ENCODE measurements at regions of chr19 and their contacts with region 1.

Region 1: GRCh38 chr19:38387550-38388348 is at the start of gene GGN:
- DNase-seq: peak; percentile 98
- H3K4me3 ChIP-seq: peak within 1 kb of the TSS; percentile 78 to 96 (median 91)
- H3K27ac ChIP-seq: peak within 1 kb of the TSS; percentile 84
- H3K4me1 ChIP-seq: peaks cover 15% of the 10 kb centered on the region
- H3K27me3 ChIP-seq: no peaks in the 10 kb centered on the region
- CTCF ChIP-seq: no peak
- POLR2A ChIP-seq: peak; percentile 18
- total RNA-seq, gene GGN: 0.88 and 1.5 TPM in 2 replicates

Region 2: GRCh38 chr19:38229585-38230073 is 158.1 kb before region 1 on chr19:
- CTCF ChIA-PET with region 1: interaction called, 21 read pairs
- POLR2A ChIA-PET with region 1: no interaction called
- dilution Hi-C with region 1: no loop called
- intact Hi-C with region 1: loop called (anchors 5 kb)
- DNase-seq: peak; percentile 77
- H3K4me3 ChIP-seq: peak overlapping the region in 1 of 3 experiments; percentile 14
- H3K27ac ChIP-seq: no peak overlapping the region
- H3K4me1 ChIP-seq: peaks cover 8% of the 10 kb centered on the region
- H3K27me3 ChIP-seq: peaks cover 9 to 14% of the 10 kb centered on the region in 2 experiments
- CTCF ChIP-seq: peak in 1 of 2 donors; percentile 13
- POLR2A ChIP-seq: no peak

Region 3: DNA sequence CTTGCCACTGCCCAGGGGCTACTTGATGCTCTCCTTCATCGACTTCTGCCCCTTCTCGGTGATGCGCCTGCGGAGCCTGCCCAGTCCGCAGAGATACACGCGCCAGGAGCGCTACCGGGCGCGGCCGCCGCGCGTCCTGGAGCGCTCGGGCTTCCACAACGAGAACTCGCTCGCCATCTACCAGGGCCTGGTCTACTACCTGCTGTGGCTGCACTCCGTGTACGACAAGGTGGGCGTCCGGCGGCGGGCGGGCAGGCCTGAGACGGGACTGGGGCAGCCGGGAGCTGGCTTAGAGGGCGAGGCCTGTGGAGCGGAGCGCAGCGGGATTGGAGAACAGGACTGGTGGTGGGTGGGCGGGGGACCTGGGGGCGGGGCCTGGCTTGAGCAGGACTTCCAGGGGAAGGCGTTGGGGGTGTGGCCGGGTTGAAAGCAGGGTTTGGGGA is 26.1 kb before region 1 on chr19:
- CTCF ChIA-PET with region 1: interaction called, 3 read pairs
- POLR2A ChIA-PET with region 1: no interaction called
- dilution Hi-C with region 1: no loop called
- intact Hi-C with region 1: loop called (anchors 2 kb)
- DNase-seq: peak; percentile 65
- H3K4me3 ChIP-seq: peak overlapping the region; percentile 42 to 49 (median 45)
- H3K27ac ChIP-seq: no peak overlapping the region
- H3K4me1 ChIP-seq: peaks cover 3% of the 10 kb centered on the region
- H3K27me3 ChIP-seq: peaks cover 13 to 14% of the 10 kb centered on the region in 2 experiments
- CTCF ChIP-seq: peak in 1 of 2 donors; percentile 10
- POLR2A ChIP-seq: no peak

Region 4: DNA sequence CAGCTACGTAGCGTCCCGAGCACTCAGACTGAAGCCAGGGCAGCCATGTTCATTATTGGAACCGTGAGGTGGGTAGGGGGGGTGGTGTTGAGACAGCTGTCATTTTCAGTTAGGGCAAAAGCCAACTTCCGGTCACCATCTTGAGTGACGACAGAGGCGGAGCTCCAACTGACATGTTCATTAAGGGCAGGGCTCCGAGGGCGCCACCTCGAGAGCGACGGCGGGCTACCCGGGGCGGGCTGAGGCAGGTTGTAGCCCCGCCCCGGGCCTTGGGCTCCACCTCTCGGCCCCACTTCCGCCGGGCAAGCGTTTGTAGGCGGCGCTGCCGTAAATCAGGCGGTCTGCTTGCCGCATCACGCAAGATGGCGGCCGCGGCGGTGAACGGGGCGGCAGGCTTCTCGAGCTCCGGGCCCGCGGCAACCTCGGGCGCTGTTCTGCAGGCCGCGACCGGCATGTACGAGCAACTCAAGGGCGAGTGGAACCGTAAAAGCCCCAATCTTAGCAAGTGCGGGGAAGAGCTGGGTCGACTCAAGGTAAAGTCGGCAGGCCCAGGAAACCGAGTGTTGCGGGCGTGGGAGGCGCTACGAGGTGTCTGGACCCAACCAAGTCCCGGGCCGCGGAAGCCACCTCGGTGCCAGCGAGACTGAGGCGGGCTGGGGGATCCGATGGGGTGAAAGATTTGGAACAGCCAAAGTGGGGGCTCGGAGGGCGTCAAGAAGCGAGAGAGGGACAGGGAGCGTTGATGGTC is 13.1 kb before region 1 on chr19 and contains the start of gene PSMD8:
- CTCF ChIA-PET with region 1: interaction called, 14 read pairs
- POLR2A ChIA-PET with region 1: interaction called, 39 read pairs
- dilution Hi-C with region 1: no loop called
- intact Hi-C with region 1: loop called (anchors 1 kb)
- DNase-seq: peak; percentile 99
- H3K4me3 ChIP-seq: peak within 1 kb of the TSS; percentile 70 to 86 (median 70)
- H3K27ac ChIP-seq: peak within 1 kb of the TSS; percentile 87
- H3K4me1 ChIP-seq: peaks cover 14% of the 10 kb centered on the region
- H3K27me3 ChIP-seq: peaks cover 3 to 4% of the 10 kb centered on the region in 2 experiments
- CTCF ChIP-seq: peak in 1 of 2 donors; percentile 33
- POLR2A ChIP-seq: peak; percentile 98
- total RNA-seq, gene PSMD8: 203 and 215 TPM in 2 replicates

Region 5: DNA sequence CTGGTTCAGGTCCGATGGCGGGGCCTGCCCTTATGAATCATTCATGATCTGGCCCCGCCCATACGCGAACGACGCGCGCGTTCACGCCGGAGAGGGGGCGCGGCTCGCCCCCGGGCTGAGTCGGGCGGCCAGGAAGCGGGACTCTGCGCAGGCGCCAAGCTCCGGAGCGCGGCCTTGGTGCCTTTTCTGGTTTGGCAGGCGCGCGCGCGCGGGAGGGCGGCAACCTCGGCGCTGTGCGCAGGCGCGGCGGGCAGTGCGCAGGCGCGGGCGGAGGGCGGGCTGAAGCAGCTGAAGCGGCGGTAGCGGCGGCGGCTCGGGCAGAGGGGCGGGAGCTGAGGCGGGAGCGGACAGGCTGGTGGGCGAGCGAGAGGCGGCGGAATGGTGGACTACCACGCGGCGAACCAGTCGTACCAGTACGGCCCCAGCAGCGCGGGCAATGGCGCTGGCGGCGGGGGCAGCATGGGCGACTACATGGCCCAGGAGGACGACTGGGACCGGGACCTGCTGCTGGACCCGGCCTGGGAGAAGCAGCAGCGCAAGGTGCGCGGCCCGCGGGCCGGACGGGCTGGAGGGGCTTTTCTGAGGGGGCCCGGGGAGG is 259.7 kb after region 1 on chr19 and contains the start of gene ACTN4:
- CTCF ChIA-PET with region 1: no interaction called
- POLR2A ChIA-PET with region 1: no interaction called
- dilution Hi-C with region 1: no loop called
- intact Hi-C with region 1: no loop called
- DNase-seq: peak; percentile 98
- H3K4me3 ChIP-seq: peak within 1 kb of the TSS; percentile 96 to 99 (median 98)
- H3K27ac ChIP-seq: peak within 1 kb of the TSS; percentile 70
- H3K4me1 ChIP-seq: peaks cover 28% of the 10 kb centered on the region
- H3K27me3 ChIP-seq: no peaks in the 10 kb centered on the region
- CTCF ChIP-seq: no peak
- POLR2A ChIP-seq: peak; percentile 97
- total RNA-seq, gene ACTN4: 693 and 748 TPM in 2 replicates

Measured in endothelial cell of umbilical vein (primary cell).